ENCODE measurements at regions of chr5 and their contacts with region 1.

Region 1: GRCh38 chr5:138491669-138492559 is 26.6 kb downstream of the EGR1 start:
- DNase-seq: peak; percentile 76
- ATAC-seq: peak; percentile 73
- H3K4me3 Mint-ChIP-seq: peak overlapping the region; percentile 82
- H3K27ac Mint-ChIP-seq: peak overlapping the region; percentile 92; the same call in 1 of the 2 replicates
- H3K4me1 Mint-ChIP-seq: peaks cover 20% of the 10 kb centered on the region
- H3K27me3 Mint-ChIP-seq: peaks cover 39% of the 10 kb centered on the region
- CTCF ChIP-seq: no peak

Region 2: DNA sequence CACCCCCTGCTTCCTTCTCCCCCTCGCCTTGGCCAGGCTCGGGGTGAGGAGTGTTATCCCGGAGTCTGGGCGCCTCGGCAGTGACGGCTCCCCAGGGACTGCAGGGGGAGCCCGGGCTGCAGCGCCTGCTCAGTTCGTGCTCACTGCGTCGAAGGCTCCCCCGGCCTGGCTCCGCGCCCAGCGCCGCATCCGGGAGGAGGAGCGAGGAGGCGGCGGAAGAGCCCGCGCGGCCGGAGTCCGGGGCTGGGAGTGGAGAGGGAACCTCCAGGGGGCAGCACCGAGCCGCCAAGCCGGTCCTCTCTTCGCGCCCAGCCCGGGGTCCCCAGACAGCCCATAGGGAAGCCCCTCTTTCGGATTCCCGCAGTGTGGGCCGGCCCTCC is 27.9 kb before region 1 on chr5:
- CTCF ChIA-PET with region 1: interaction called, 10 read pairs
- POLR2A ChIA-PET with region 1: interaction called, 22 read pairs
- DNase-seq: peak; percentile 92
- ATAC-seq: peak; percentile 61
- H3K4me3 Mint-ChIP-seq: peak overlapping the region; percentile 83
- H3K27ac Mint-ChIP-seq: peak overlapping the region; percentile 94; the same call in 1 of the 2 replicates
- H3K4me1 Mint-ChIP-seq: 0 out of 2 replicates have a peak, but pooled peaks cover 7% of the 10 kb centered on the region
- H3K27me3 Mint-ChIP-seq: peaks cover 34% of the 10 kb centered on the region
- CTCF ChIP-seq: peak; percentile 83